Heart right ventricle (tissue), 16 donors: ENCODE measurements at regions of chr17 and their contacts with region 1.

Region 1: GRCh38 chr17:66625311-66625775 is 209.6 kb upstream of the CACNG5 start:
- DNase-seq: no peak
- ATAC-seq: peak in 1 of 8 donors; percentile 31
- H3K4me3 ChIP-seq: no peak overlapping the region
- H3K27ac ChIP-seq: no peak overlapping the region
- H3K4me1 ChIP-seq: no peaks in the 10 kb centered on the region
- H3K27me3 ChIP-seq: no peaks in the 10 kb centered on the region
- CTCF ChIP-seq: peak; percentile 17 to 68 (median 54)

Region 2: DNA sequence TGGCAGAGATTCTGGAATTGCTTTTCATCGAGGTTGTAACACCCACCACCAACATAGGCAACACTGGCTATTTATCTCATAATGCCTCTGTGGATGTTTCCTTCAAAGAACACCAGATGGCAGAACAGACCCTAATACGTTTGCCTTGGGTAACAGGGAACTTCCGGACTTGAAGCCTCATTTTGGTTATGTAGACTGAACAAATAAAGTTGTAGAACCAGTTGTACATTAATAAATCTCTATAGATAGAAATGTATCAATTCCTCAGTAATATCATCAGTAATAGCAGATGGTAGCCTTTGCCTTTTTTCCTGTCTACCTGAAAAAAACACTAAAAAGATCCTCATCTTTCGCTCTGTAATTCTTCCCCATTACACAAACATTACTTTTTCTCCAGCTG is 370.2 kb before region 1 on chr17:
- intact Hi-C with region 1: loop called (anchors 1 to 10 kb)
- DNase-seq: peak in 1 of 2 donors; percentile 36
- ATAC-seq: peak in 7 of 8 donors; percentile 58 to 82 (median 68)
- H3K4me3 ChIP-seq: no peak overlapping the region
- H3K27ac ChIP-seq: no peak overlapping the region
- H3K4me1 ChIP-seq: peaks cover 0 to 3% (median 0%) of the 10 kb centered on the region in 9 donors
- H3K27me3 ChIP-seq: no peaks in the 10 kb centered on the region
- CTCF ChIP-seq: peak; percentile 32 to 83 (median 70)

Region 3: DNA sequence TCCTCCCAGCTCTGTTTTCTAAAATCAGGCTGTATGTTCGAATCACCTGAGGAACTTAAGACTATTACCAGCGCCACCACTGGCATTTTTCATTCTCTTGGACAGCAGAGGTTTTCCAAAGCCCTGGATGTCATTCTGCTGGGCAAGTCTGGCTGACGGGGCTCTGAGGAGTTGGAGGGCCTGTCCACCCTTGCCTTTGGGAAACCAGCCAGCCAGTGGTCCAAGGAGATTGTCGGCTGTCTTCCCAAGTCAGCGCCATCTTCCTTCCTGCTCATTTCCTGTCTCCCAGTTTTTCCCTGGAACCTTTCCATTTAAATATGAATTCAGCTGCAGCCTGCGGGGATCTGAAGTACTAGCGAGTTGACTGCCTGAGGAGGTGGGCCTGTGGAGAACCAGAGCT is 64.7 kb before region 1 on chr17:
- intact Hi-C with region 1: no loop called
- DNase-seq: no peak
- ATAC-seq: no peak
- H3K4me3 ChIP-seq: no peak overlapping the region
- H3K27ac ChIP-seq: no peak overlapping the region
- H3K4me1 ChIP-seq: peaks cover 0 to 4% (median 0%) of the 10 kb centered on the region in 9 donors
- H3K27me3 ChIP-seq: no peaks in the 10 kb centered on the region
- CTCF ChIP-seq: no peak

Region 4: GRCh38 chr17:66819466-66819865 is 194.1 kb after region 1 on chr17:
- intact Hi-C with region 1: no loop called
- DNase-seq: no peak
- ATAC-seq: no peak
- H3K4me3 ChIP-seq: no peak overlapping the region
- H3K27ac ChIP-seq: no peak overlapping the region
- H3K4me1 ChIP-seq: no peaks in the 10 kb centered on the region
- H3K27me3 ChIP-seq: peaks cover 0 to 23% (median 4%) of the 10 kb centered on the region in 7 donors
- CTCF ChIP-seq: no peak